ENCODE measurements at regions of chr7 and their contacts with region 1.

Region 1: DNA sequence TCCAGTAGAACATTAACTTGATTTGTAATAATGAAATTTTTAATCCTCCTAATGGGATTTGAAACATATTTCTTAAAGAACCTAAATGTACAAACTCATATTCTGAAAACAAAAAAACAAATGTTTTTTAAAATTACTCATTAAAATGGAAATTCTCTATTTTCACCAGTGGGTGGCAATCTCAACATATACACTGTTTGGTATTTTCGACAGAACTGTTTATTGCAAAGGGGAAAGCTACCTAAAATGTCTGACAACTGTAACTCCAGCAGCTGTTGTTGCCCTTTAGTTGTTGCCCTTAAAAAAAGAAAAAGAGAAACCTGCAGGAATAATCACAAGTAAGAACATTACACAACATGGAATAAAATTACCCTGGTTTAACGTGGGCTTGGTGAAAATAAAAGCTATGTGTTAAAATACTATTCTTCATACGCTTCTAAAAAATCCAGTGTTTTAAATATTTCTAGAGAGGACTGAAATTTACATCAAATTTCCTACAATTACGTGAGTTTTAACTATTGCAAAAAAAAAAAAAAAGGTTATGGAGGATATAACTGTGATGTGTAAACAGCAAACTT is 54.5 kb downstream of the COL1A2 start:
- DNase-seq: peak in 6 of 9 donors; percentile 0 to 45 (median 24)
- ATAC-seq: peak; percentile 60
- H3K4me3 ChIP-seq: no peak overlapping the region
- H3K4me3 Mint-ChIP-seq: no peak overlapping the region
- H3K27ac ChIP-seq: no peak overlapping the region
- H3K27ac Mint-ChIP-seq: no peak overlapping the region
- H3K4me1 ChIP-seq: no peaks in the 10 kb centered on the region
- H3K4me1 Mint-ChIP-seq: no peaks in the 10 kb centered on the region
- H3K27me3 ChIP-seq: peaks cover 0 to 2% of the 10 kb centered on the region in 2 donors
- H3K27me3 Mint-ChIP-seq: peaks cover 7 to 19% (median 11%) of the 10 kb centered on the region in 5 donors

Region 2: GRCh38 chr7:94423863-94424735 is 25.1 kb before region 1 on chr7:
- CTCF ChIA-PET with region 1: no interaction called
- POLR2A ChIA-PET with region 1: no interaction called
- intact Hi-C with region 1: no loop called
- DNase-seq: no peak
- ATAC-seq: no peak
- H3K4me3 ChIP-seq: no peak overlapping the region
- H3K4me3 Mint-ChIP-seq: no peak overlapping the region
- H3K27ac ChIP-seq: no peak overlapping the region
- H3K27ac Mint-ChIP-seq: no peak overlapping the region
- H3K4me1 ChIP-seq: no peaks in the 10 kb centered on the region
- H3K4me1 Mint-ChIP-seq: no peaks in the 10 kb centered on the region
- H3K27me3 ChIP-seq: no peaks in the 10 kb centered on the region
- H3K27me3 Mint-ChIP-seq: peaks cover 0 to 18% (median 12%) of the 10 kb centered on the region in 5 donors

Region 3: GRCh38 chr7:94509879-94510581 is 60.8 kb after region 1 on chr7:
- CTCF ChIA-PET with region 1: no interaction called
- POLR2A ChIA-PET with region 1: no interaction called
- intact Hi-C with region 1: loop called in 1 of 2 experiments (anchors 1 kb)
- DNase-seq: peak; percentile 51 to 75 (median 69)
- ATAC-seq: peak; percentile 90
- H3K4me3 ChIP-seq: peak overlapping the region; percentile 74
- H3K4me3 Mint-ChIP-seq: peak overlapping the region in 7 of 10 donors; percentile 75 to 93 (median 88)
- H3K27ac ChIP-seq: peak overlapping the region; percentile 90
- H3K27ac Mint-ChIP-seq: peak overlapping the region in 7 of 9 donors; percentile 70 to 94 (median 92)
- H3K4me1 ChIP-seq: peaks cover 17 to 22% of the 10 kb centered on the region in 2 donors
- H3K4me1 Mint-ChIP-seq: peaks cover 27 to 52% (median 42%) of the 10 kb centered on the region in 7 donors
- H3K27me3 ChIP-seq: no peaks in the 10 kb centered on the region
- H3K27me3 Mint-ChIP-seq: no peaks in the 10 kb centered on the region

Region 4: DNA sequence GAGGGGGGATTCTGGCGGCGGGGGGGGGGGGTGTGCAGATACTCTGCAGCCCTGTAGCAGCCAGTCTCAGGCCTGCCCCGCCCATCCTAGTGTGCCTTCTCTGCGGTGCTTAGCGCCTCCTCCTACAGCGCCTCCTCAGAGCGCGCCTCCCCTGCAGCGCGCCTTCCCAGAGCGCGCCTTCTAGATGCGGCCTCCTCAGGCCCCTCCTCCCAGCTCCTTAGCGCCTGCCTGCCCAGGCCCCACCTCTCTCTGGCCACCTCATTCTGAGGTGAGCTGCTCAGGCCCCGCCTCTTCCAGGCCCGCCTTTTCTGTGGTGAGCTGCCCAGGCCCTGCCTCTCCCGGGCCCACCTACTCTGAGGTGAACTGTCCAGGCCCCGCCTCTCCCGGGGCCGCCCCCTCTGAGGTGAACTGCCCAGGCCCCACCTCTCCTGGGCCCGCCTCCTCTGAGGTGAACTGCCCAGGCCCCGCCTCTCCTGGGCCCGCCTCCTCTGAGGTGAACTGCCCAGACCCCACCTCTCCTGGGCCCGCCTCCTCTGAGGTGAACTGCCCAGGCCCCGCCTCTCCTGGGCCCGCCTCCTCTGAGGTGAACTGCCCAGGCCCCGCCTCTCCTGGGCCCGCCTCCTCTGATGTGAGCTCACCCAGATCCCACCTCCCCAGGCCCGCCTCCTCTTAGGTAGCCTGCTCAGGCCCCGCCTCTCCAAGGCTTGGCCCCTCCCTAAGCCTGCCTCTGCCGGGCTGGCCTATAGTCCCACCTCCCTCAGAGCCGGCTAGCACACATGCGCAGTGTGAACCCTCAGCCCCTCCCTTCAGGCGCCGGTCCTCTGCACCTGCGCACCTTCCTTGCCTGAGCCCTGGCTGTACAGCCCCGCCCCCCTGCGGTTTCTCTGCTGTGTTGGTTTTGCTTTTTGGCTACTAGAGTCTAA is 208.8 kb after region 1 on chr7:
- CTCF ChIA-PET with region 1: no interaction called
- POLR2A ChIA-PET with region 1: no interaction called
- intact Hi-C with region 1: loop called (anchors 1 to 10 kb)
- DNase-seq: peak; percentile 83 to 97 (median 95)
- ATAC-seq: peak; percentile 88
- H3K4me3 ChIP-seq: peak overlapping the region; percentile 85
- H3K4me3 Mint-ChIP-seq: peak overlapping the region; percentile 83 to 91 (median 88)
- H3K27ac ChIP-seq: no peak overlapping the region
- H3K27ac Mint-ChIP-seq: peak overlapping the region in 6 of 9 donors; percentile 17 to 84 (median 54)
- H3K4me1 ChIP-seq: peaks cover 15 to 16% of the 10 kb centered on the region in 2 donors
- H3K4me1 Mint-ChIP-seq: peaks cover 8 to 24% (median 17%) of the 10 kb centered on the region in 7 donors
- H3K27me3 ChIP-seq: peaks cover 14 to 21% of the 10 kb centered on the region in 2 donors
- H3K27me3 Mint-ChIP-seq: peaks cover 11 to 28% (median 23%) of the 10 kb centered on the region in 5 donors

Region 5: DNA sequence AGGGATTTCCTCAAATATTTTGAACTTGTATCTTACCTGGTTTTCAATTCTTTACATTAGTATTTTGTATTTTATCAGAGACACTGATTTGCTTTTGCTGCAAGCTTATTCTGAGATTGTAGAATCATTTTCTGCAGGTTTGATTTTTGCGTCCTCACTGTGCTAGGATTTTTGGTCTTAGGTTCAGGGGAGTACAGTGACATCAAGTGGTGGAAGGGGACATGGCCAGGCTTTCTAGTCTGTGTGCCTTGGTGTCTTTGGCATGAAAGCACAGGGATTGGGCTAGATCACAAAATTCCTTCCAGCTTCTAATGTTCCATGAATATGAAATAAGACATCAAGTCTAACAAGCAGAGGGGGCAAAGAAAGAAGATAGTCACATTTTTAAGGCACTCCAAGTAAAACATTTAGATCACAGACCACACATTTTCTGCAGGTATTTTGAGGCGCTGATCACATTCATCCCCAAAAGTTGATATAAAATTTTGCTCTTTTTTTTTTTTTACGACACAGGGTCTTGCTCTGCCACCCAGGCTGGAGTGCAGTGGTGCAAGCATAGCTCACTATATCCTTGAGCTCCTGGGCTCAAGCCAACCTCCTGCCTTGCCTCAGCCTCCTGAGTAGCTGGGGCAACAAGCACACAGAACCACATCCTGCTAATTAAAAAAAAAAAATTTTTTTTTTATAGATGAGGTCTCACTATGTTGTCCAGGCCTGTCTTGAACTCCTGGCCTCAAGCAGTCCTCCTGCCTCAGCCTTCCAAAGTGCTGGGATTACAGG is 750.7 kb after region 1 on chr7:
- CTCF ChIA-PET with region 1: no interaction called
- POLR2A ChIA-PET with region 1: no interaction called
- intact Hi-C with region 1: loop called in 1 of 2 experiments (anchors 5 kb)
- DNase-seq: no peak
- ATAC-seq: no peak
- H3K4me3 ChIP-seq: no peak overlapping the region
- H3K4me3 Mint-ChIP-seq: no peak overlapping the region
- H3K27ac ChIP-seq: no peak overlapping the region
- H3K27ac Mint-ChIP-seq: no peak overlapping the region
- H3K4me1 ChIP-seq: no peaks in the 10 kb centered on the region
- H3K4me1 Mint-ChIP-seq: no peaks in the 10 kb centered on the region
- H3K27me3 ChIP-seq: no peaks in the 10 kb centered on the region
- H3K27me3 Mint-ChIP-seq: peaks cover 0 to 8% (median 3%) of the 10 kb centered on the region in 5 donors

Region 6: GRCh38 chr7:95476904-95477594 is 1027.8 kb after region 1 on chr7:
- CTCF ChIA-PET with region 1: interaction called, 25 read pairs
- POLR2A ChIA-PET with region 1: interaction called, 3 read pairs
- intact Hi-C with region 1: loop called (anchors 1 kb)
- DNase-seq: peak in 6 of 9 donors; percentile 14 to 53 (median 45)
- ATAC-seq: peak; percentile 80
- H3K4me3 ChIP-seq: no peak overlapping the region
- H3K4me3 Mint-ChIP-seq: peak overlapping the region in 4 of 10 donors; percentile 11 to 57 (median 40)
- H3K27ac ChIP-seq: no peak overlapping the region
- H3K27ac Mint-ChIP-seq: peak overlapping the region in 1 of 9 donors; percentile 60
- H3K4me1 ChIP-seq: no peaks in the 10 kb centered on the region
- H3K4me1 Mint-ChIP-seq: peaks cover 0 to 1% (median 0%) of the 10 kb centered on the region in 7 donors
- H3K27me3 ChIP-seq: no peaks in the 10 kb centered on the region
- H3K27me3 Mint-ChIP-seq: peaks cover 0 to 12% (median 5%) of the 10 kb centered on the region in 5 donors

Region 7: DNA sequence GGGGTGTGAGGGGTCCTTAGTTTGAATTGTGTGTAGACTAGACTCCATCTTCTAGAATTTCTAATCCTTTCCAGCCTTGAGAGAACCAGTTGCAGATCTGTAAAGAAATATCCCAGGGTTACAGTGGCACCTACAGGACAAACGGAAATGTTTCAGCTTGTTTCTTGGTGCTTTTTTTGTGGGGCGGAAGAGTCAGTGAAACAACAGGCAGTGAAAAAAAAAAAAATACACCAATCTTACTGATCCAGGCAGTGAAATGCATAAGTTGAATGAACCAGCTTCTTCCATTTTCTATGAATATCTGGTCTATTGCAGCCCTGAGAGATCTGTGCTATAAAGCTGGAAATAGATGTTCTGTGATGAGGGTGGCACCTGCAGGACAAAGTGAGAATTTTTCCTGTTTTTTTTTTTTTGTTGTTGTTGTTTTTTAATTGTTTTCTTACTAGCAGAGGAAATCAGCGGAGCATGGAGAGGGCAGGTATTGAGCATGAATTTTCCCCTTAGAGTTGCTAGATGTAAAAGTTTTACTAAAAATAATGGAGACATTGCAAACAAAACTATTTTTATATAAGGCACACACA is 1241.2 kb after region 1 on chr7:
- CTCF ChIA-PET with region 1: no interaction called
- POLR2A ChIA-PET with region 1: no interaction called
- intact Hi-C with region 1: loop called in 1 of 2 experiments (anchors 5 kb)
- DNase-seq: no peak
- ATAC-seq: peak; percentile 54
- H3K4me3 ChIP-seq: no peak overlapping the region
- H3K4me3 Mint-ChIP-seq: peak overlapping the region in 1 of 10 donors; percentile 22
- H3K27ac ChIP-seq: no peak overlapping the region
- H3K27ac Mint-ChIP-seq: no peak overlapping the region
- H3K4me1 ChIP-seq: no peaks in the 10 kb centered on the region
- H3K4me1 Mint-ChIP-seq: peaks cover 0 to 5% (median 0%) of the 10 kb centered on the region in 7 donors
- H3K27me3 ChIP-seq: no peaks in the 10 kb centered on the region
- H3K27me3 Mint-ChIP-seq: peaks cover 0 to 10% (median 6%) of the 10 kb centered on the region in 5 donors